ENCODE measurements at regions of chrX and their contacts with region 1.

Region 1: GRCh38 chrX:12080265-12080664 is 58.0 kb upstream of the FRMPD4 start:
- DNase-seq: no peak
- ATAC-seq: no peak
- H3K4me3 ChIP-seq: no peak overlapping the region
- H3K27ac ChIP-seq: no peak overlapping the region
- H3K4me1 ChIP-seq: peaks cover 0 to 5% (median 0%) of the 10 kb centered on the region in 12 donors
- H3K27me3 ChIP-seq: peaks cover 0 to 8% (median 0%) of the 10 kb centered on the region in 9 donors
- CTCF ChIP-seq: peak; percentile 21 to 55 (median 37)
- POLR2A ChIP-seq: no peak

Region 2: DNA sequence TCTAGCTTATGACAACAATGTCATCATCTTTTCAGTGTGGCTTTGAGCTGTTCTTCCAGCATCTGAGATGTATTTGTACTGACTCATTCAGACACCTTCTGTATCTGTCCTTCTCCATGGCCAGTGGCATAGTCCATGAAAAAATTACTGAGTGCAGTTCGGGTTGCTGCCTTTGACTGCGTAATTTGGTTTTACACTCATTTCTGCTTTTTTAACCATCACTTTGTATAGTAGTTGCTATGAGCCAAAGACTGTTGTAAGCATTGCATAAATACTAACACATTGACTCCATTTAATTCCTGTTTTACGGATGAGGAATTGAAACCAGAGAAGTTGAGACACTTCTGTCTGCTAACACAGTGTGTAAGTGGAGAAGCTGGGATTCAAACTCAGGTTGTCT is 1269.2 kb before region 1 on chrX:
- intact Hi-C with region 1: loop called in 1 of 10 experiments (anchors 10 kb)
- DNase-seq: no peak
- ATAC-seq: no peak
- H3K4me3 ChIP-seq: no peak overlapping the region
- H3K27ac ChIP-seq: no peak overlapping the region
- H3K4me1 ChIP-seq: no peaks in the 10 kb centered on the region
- H3K27me3 ChIP-seq: no peaks in the 10 kb centered on the region
- CTCF ChIP-seq: no peak
- POLR2A ChIP-seq: no peak

Region 3: DNA sequence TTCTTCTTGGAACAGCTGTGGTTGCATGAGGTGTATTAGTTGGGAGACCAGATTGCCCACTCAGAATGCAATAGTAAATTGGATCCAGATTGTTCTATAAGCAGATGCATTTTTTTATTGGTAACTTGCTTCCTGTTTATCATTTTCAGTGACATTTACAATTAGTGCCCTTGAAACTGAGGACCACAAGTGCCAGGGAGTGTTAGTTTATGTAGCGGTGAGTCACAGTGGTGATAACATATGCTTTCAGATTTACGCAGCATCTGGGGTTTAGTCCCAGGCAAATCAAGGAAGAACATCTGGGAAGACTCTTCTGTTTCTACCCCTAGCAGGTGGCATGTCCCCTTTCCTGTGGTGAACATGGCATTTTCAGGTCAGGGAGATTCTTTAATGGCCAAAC is 82.2 kb after region 1 on chrX:
- intact Hi-C with region 1: no loop called
- DNase-seq: no peak
- ATAC-seq: no peak
- H3K4me3 ChIP-seq: no peak overlapping the region
- H3K27ac ChIP-seq: no peak overlapping the region
- H3K4me1 ChIP-seq: no peaks in the 10 kb centered on the region
- H3K27me3 ChIP-seq: no peaks in the 10 kb centered on the region
- CTCF ChIP-seq: no peak
- POLR2A ChIP-seq: no peak

Region 4: GRCh38 chrX:12447448-12448064 is 367.3 kb after region 1 on chrX:
- intact Hi-C with region 1: loop called in 1 of 10 experiments (anchors 5 kb)
- DNase-seq: no peak
- ATAC-seq: no peak
- H3K4me3 ChIP-seq: no peak overlapping the region
- H3K27ac ChIP-seq: no peak overlapping the region
- H3K4me1 ChIP-seq: no peaks in the 10 kb centered on the region
- H3K27me3 ChIP-seq: no peaks in the 10 kb centered on the region
- CTCF ChIP-seq: peak in 3 of 12 donors; percentile 16 to 34 (median 31)
- POLR2A ChIP-seq: no peak

Region 5: GRCh38 chrX:12701628-12702027 is 621.4 kb after region 1 on chrX:
- intact Hi-C with region 1: loop called in 8 of 10 experiments (anchors 2 to 10 kb)
- DNase-seq: peak in 4 of 5 donors; percentile 13 to 40 (median 26)
- ATAC-seq: peak in 3 of 4 donors; percentile 53 to 79 (median 63)
- H3K4me3 ChIP-seq: no peak overlapping the region
- H3K27ac ChIP-seq: no peak overlapping the region
- H3K4me1 ChIP-seq: no peaks in the 10 kb centered on the region
- H3K27me3 ChIP-seq: peaks cover 0 to 38% (median 0%) of the 10 kb centered on the region in 9 donors
- CTCF ChIP-seq: peak; percentile 11 to 53 (median 39)
- POLR2A ChIP-seq: no peak

Region 6: DNA sequence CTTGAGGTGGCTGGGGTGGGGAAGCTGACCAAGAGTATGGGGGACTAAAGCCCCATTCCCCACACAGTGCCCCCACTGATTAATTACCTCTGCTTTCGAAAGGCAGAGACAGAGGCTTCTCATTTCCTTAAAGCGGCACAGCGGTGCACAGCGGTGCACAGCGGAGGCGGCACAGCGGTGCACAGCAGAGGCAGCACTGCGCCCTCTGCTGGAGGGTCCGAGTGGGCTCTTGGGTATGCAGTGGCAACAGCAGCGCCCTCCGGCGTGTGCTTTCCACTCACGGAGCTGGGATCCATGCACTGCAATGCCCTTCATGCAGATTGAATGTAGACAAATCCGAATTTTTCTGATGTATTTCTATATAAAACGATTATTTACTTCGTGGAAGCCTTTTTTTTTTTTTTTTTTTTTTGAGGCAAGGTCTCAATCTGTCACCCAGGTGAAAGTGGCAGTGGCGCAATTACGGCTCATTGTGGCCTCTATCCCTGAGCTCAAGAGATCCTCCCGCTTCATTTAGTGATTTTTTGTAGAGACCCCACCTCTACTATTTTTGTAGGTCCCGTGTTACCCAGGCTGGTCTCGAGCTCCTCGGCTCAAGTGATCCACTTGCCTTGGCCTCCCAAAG is 691.3 kb after region 1 on chrX:
- intact Hi-C with region 1: loop called in 1 of 10 experiments (anchors 5 kb)
- DNase-seq: peak; percentile 7 to 71 (median 31)
- ATAC-seq: peak in 3 of 4 donors; percentile 49 to 83 (median 60)
- H3K4me3 ChIP-seq: no peak overlapping the region
- H3K27ac ChIP-seq: no peak overlapping the region
- H3K4me1 ChIP-seq: no peaks in the 10 kb centered on the region
- H3K27me3 ChIP-seq: peaks cover 0 to 43% (median 3%) of the 10 kb centered on the region in 9 donors
- CTCF ChIP-seq: peak; percentile 29 to 59 (median 39)
- POLR2A ChIP-seq: no peak